ENCODE measurements at regions of chr4 and their contacts with region 1.

Region 1: GRCh38 chr4:147731580-147732517 is at the start of gene ARHGAP10:
- DNase-seq: peak; percentile 87
- H3K4me3 ChIP-seq: peak within 1 kb of the TSS; percentile 70
- H3K27ac ChIP-seq: peak within 1 kb of the TSS; percentile 60
- H3K4me1 ChIP-seq: peaks cover 18% of the 10 kb centered on the region
- H3K27me3 ChIP-seq: peaks cover 22% of the 10 kb centered on the region
- CTCF ChIP-seq: no peak
- total RNA-seq, gene ARHGAP10: 4.3 and 4.8 TPM in 2 replicates

Region 2: DNA sequence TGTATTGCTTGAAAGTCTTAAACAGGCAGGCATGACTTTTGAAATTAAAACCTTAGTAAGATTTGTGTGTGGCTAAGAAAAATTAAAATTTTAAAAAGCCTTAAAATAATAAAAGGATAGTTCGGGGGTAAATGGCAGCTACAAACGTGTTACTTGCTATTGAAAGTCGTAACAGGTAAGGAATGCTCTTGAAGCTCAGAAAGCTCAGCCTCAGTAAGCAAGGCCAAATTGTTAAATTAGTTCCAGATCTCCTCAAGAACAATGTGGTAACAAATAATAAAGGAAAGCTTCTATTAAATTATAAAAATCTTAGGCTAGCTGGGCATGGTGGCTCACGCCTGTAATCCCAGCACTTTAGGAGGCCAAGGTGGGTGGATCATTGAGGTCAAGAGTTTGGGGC is 73.3 kb before region 1 on chr4:
- CTCF ChIA-PET with region 1: no interaction called
- POLR2A ChIA-PET with region 1: no interaction called
- intact Hi-C with region 1: no loop called
- DNase-seq: no peak
- H3K4me3 ChIP-seq: no peak overlapping the region
- H3K27ac ChIP-seq: no peak overlapping the region
- H3K4me1 ChIP-seq: no peaks in the 10 kb centered on the region
- H3K27me3 ChIP-seq: no peaks in the 10 kb centered on the region
- CTCF ChIP-seq: no peak

Region 3: DNA sequence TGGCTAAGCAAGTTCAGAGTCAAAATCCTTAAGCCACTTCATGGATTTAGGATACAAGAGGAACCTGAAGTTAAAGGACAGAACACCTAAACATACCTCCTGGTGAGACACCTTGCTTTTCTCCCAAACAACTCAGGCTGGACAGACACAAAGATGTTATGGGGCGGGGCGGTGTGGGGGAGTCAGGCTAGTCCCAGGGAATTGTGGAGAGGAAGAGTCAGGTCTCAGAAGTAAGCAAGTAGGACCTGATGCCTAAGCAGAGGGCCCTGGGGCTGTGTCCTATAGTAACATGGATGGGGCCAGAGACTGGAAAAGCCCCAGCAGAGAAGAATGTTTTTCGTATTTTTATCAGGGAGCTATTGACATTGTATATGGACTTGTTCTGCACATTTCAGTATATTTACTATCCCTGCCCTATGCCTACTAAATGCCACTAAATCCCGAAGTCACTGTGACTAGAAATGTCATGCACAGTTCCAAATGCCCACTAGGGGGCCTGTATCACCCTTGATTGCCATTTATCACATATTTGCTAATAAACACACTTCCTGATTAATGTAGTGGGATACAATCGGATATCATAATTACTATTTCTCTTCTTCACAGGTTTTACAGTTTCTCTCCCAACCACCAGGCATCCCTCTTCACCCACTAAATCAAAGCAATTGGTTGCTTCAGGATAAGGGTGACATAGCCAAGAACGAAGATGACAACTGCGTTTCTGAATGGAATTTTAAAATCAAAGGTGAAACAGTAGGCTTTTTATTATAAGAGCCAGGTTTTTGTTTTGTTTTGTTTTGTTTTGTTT is 23.8 kb before region 1 on chr4:
- CTCF ChIA-PET with region 1: no interaction called
- POLR2A ChIA-PET with region 1: interaction called, 11 read pairs
- intact Hi-C with region 1: no loop called
- DNase-seq: peak; percentile 64
- H3K4me3 ChIP-seq: no peak overlapping the region
- H3K27ac ChIP-seq: no peak overlapping the region
- H3K4me1 ChIP-seq: no peaks in the 10 kb centered on the region
- H3K27me3 ChIP-seq: no peaks in the 10 kb centered on the region
- CTCF ChIP-seq: peak; percentile 91

Region 4: GRCh38 chr4:148112231-148112982 is 380.6 kb after region 1 on chr4:
- CTCF ChIA-PET with region 1: no interaction called
- POLR2A ChIA-PET with region 1: no interaction called
- intact Hi-C with region 1: no loop called
- DNase-seq: peak; percentile 70
- H3K4me3 ChIP-seq: no peak overlapping the region
- H3K27ac ChIP-seq: no peak overlapping the region
- H3K4me1 ChIP-seq: peaks cover 33% of the 10 kb centered on the region
- H3K27me3 ChIP-seq: no peaks in the 10 kb centered on the region
- CTCF ChIP-seq: no peak

Measured in A673 (cell line).